CD4-positive, alpha-beta memory T cell (primary cell): ENCODE measurements at regions of chr22 and their contacts with region 1.

Region 1: DNA sequence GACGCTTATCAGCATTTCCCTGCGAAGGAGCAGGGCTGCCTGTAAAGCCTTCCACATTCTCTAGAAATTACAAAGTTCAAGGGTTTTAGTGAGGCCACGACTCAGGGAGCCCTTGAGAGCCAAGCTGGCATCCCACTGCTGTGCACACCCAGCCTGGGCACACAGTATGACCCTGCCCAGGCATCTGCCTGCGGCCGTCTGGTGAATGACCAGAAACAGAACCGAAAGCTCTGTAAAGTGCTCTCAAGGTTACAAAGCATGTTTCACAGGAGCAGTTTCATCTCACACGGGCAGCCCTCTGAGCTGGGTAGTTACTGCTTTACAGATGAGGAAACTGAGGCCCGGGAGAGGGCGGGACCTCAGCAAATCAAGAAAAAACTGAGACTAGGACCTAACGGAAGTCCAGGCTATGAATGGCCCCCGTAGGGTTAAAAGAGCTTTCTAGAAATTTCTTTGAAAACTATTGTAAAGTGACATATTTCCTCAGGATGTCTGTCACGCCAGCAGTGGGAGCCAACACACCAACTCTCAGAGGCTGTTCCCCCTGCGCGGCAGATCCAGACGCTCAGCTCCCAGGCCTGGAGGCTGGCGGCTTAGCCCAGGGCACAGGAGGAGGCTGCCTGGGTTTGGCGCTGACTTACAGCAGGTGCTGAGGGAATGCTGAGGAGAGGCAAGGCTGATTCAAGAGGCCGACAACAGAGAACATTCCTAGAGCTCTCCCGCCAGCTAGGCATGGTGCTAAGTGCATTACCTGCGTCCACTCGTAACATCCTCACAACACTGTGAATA is 7.7 kb upstream of the TCF20 start:
- DNase-seq: no peak
- H3K4me3 ChIP-seq: no peak overlapping the region
- H3K4me3 Mint-ChIP-seq: no peak overlapping the region
- H3K27ac ChIP-seq: no peak overlapping the region
- H3K27ac Mint-ChIP-seq: no peak overlapping the region
- H3K4me1 ChIP-seq: peaks cover 4% of the 10 kb centered on the region
- H3K4me1 Mint-ChIP-seq: peaks cover 6 to 12% (median 7%) of the 10 kb centered on the region in 4 donors
- H3K27me3 ChIP-seq: no peaks in the 10 kb centered on the region
- H3K27me3 Mint-ChIP-seq: no peaks in the 10 kb centered on the region

Region 2: DNA sequence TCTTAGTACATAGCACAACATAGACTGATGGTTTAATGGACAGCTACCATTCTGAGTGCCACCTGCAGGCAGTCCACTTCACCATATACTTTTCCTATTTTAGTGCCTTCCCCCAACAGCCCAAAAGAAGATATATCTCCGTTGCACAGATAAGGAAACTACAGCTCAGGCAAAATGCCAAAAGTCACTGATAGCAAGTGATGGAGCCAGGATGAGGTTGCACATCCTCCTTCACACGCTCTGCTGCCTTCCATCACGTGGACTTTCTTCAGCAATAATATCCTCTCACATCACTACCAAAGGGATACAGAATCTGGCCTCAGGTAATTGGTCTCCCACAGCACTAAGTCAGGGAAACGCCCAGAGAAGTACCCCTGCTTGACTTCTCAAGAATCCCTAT is 15.2 kb before region 1 on chr22:
- CTCF ChIA-PET with region 1: no interaction called
- POLR2A ChIA-PET with region 1: no interaction called
- intact Hi-C with region 1: no loop called
- DNase-seq: peak in 3 of 5 donors; percentile 23 to 33 (median 25)
- H3K4me3 ChIP-seq: no peak overlapping the region
- H3K4me3 Mint-ChIP-seq: peak overlapping the region in 6 of 8 donors; percentile 9 to 52 (median 34)
- H3K27ac ChIP-seq: no peak overlapping the region
- H3K27ac Mint-ChIP-seq: peak overlapping the region in 5 of 7 donors; percentile 33 to 75 (median 60)
- H3K4me1 ChIP-seq: peaks cover 94% of the 10 kb centered on the region
- H3K4me1 Mint-ChIP-seq: peaks cover 74 to 97% (median 87%) of the 10 kb centered on the region in 4 donors
- H3K27me3 ChIP-seq: no peaks in the 10 kb centered on the region
- H3K27me3 Mint-ChIP-seq: no peaks in the 10 kb centered on the region

Region 3: DNA sequence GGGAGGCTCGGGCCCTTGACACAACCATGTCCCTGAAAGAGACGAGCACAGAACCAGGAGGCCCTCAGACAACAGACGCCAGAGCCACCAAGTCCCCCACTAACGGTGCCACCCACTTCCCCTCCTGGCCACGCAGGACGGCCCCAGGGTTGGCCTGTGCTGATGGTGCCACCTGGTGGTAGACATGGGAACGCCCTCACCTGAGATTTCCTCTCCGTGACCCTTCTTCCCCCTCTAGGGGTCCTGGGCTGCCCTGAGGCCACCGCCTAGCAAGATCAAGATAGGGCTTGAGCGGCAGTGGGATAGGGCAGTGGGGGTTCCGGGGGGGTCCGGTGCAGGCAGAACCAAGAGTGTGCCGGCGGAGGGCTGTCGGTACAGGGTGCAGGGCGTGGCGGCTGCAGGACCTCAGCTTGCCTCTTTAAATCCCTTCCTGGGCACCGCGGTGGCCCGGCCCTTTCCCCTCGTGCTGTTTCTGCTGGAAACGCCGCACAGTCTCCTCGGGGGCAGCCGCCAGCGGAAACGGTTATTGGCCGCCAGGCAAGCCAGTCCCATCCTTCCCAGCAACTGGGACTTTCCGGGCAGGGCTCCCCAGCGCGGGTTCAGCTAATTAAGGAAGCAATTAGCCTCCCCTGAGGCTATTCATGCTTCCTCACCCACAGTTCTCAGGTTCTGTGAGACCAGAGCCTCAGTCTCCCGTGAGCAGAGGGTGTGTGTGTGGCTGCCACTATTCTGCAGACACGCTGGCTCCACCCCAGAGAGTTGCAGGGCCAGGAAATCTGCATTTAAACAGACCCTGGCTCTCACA is 159.5 kb after region 1 on chr22:
- CTCF ChIA-PET with region 1: interaction called, 14 read pairs
- POLR2A ChIA-PET with region 1: no interaction called
- intact Hi-C with region 1: loop called (anchors 5 kb)
- DNase-seq: peak; percentile 80 to 86 (median 81)
- H3K4me3 ChIP-seq: peak overlapping the region; percentile 48 to 79
- H3K4me3 Mint-ChIP-seq: peak overlapping the region; percentile 77 to 91 (median 84)
- H3K27ac ChIP-seq: peak overlapping the region; percentile 3
- H3K27ac Mint-ChIP-seq: peak overlapping the region in 5 of 7 donors; percentile 48 to 83 (median 76)
- H3K4me1 ChIP-seq: peaks cover 10% of the 10 kb centered on the region
- H3K4me1 Mint-ChIP-seq: peaks cover 4 to 17% (median 7%) of the 10 kb centered on the region in 4 donors
- H3K27me3 ChIP-seq: no peaks in the 10 kb centered on the region
- H3K27me3 Mint-ChIP-seq: peaks cover 0 to 2% of the 10 kb centered on the region in 2 donors

Region 4: DNA sequence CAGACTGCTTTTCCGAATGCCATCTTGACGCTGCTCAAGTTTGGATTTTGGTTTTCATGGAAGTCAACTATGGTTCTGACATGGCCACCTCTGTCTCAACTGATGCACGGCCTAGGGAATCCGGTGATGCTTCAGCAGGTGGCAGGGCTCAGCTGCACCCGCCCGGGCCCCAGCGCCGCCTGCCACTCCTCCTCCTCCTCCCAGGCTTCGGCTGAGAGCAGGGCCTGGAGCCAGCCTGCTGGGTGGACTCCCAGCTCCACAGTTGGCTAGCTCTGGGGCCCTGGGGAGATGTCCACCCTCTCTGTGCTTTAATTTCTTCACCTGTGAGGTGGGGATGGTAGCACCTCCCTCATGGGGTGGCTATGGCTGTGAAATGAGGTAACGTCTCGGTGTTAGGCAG is 174.3 kb after region 1 on chr22:
- CTCF ChIA-PET with region 1: no interaction called
- POLR2A ChIA-PET with region 1: no interaction called
- intact Hi-C with region 1: no loop called
- DNase-seq: no peak
- H3K4me3 ChIP-seq: no peak overlapping the region
- H3K4me3 Mint-ChIP-seq: no peak overlapping the region
- H3K27ac ChIP-seq: no peak overlapping the region
- H3K27ac Mint-ChIP-seq: no peak overlapping the region
- H3K4me1 ChIP-seq: no peaks in the 10 kb centered on the region
- H3K4me1 Mint-ChIP-seq: no peaks in the 10 kb centered on the region
- H3K27me3 ChIP-seq: no peaks in the 10 kb centered on the region
- H3K27me3 Mint-ChIP-seq: peaks cover 3 to 4% of the 10 kb centered on the region in 2 donors